SK-N-SH (cell line): ENCODE measurements at regions of chr9 and their contacts with region 1.

Region 1: GRCh38 chr9:12702160-12702758 is 9.1 kb downstream of the TYRP1 start:
- DNase-seq: peak; percentile 30
- H3K4me3 ChIP-seq: peak overlapping the region in 1 of 2 experiments; percentile 41; a peak in 1 of 4 replicates
- H3K27ac ChIP-seq: no peak overlapping the region
- H3K4me1 ChIP-seq: peaks cover 0 to 14% of the 10 kb centered on the region in 2 experiments; a peak in 2 of 4 replicates
- H3K27me3 ChIP-seq: no peaks in the 10 kb centered on the region
- CTCF ChIP-seq: peak; percentile 76
- EP300 ChIP-seq: no peak
- RAD21 ChIP-seq: peak; percentile 96

Region 2: DNA sequence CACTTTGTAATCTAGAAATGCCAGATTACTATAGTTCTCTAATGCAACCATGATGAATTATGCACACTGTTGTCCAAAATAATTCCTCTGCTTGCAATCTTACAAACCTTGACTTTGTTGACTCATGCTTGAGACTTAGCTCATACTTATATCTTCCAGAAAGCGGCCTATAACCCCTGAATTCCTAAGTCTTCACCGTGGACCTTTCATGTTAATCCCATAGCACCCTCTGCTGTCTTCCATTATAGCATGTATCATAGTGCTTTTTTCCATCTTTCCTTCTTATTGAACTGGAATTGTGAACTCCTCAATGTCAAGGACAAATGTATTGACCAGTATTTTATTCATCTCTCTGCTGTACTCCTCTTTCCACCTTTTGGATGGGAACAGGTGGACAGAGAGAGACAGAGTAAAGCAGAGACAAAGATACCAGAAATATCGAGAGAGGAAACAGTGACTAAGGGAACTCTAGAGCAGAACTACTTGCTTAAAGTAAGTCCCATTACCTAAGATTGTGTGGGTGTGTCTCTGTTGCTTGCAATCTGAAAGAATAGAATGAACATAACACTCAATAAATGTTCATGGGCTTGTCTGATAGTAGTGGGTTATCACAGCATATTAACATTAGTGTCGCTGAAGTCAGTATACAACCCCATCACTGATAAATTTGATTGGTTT is 182.6 kb after region 1 on chr9:
- CTCF ChIA-PET with region 1: interaction called, 11 read pairs
- POLR2A ChIA-PET with region 1: no interaction called
- DNase-seq: peak; percentile 29
- H3K4me3 ChIP-seq: no peak overlapping the region; a peak in 1 of 4 replicates
- H3K27ac ChIP-seq: no peak overlapping the region
- H3K4me1 ChIP-seq: no peaks in the 10 kb centered on the region; a peak in 2 of 4 replicates
- H3K27me3 ChIP-seq: no peaks in the 10 kb centered on the region
- CTCF ChIP-seq: peak; percentile 71
- EP300 ChIP-seq: no peak
- RAD21 ChIP-seq: peak; percentile 92

Region 3: GRCh38 chr9:13033959-13034693 is 331.9 kb after region 1 on chr9:
- CTCF ChIA-PET with region 1: interaction called, 11 read pairs
- POLR2A ChIA-PET with region 1: no interaction called
- DNase-seq: peak; percentile 87
- H3K4me3 ChIP-seq: peak overlapping the region; percentile 24 to 56
- H3K27ac ChIP-seq: no peak overlapping the region; a peak in 1 of 4 replicates
- H3K4me1 ChIP-seq: peaks cover 0 to 2% of the 10 kb centered on the region in 2 experiments; a peak in 1 of 4 replicates
- H3K27me3 ChIP-seq: no peaks in the 10 kb centered on the region
- CTCF ChIP-seq: peak; percentile 85
- EP300 ChIP-seq: no peak
- RAD21 ChIP-seq: peak; percentile 93